CD4-positive, alpha-beta T cell (primary cell): ENCODE measurements at regions of chr5 and their contacts with region 1.

Region 1: GRCh38 chr5:79235634-79236363 is at the start of gene JMY:
- DNase-seq: peak; percentile 72 to 94 (median 84)
- ATAC-seq: peak; percentile 86
- H3K4me3 ChIP-seq: peak within 1 kb of the TSS; percentile 65
- H3K4me3 Mint-ChIP-seq: peak within 1 kb of the TSS; percentile 97
- H3K27ac ChIP-seq: peak within 1 kb of the TSS; percentile 79 to 89
- H3K27ac Mint-ChIP-seq: peak within 1 kb of the TSS; percentile 96
- H3K4me1 ChIP-seq: peaks cover 26% of the 10 kb centered on the region
- H3K4me1 Mint-ChIP-seq: peaks cover 30% of the 10 kb centered on the region
- H3K27me3 ChIP-seq: no peaks in the 10 kb centered on the region
- H3K27me3 Mint-ChIP-seq: no peaks in the 10 kb centered on the region
- CTCF ChIP-seq: no peak
- total RNA-seq, gene JMY: 73.3 to 73.5 TPM

Region 2: DNA sequence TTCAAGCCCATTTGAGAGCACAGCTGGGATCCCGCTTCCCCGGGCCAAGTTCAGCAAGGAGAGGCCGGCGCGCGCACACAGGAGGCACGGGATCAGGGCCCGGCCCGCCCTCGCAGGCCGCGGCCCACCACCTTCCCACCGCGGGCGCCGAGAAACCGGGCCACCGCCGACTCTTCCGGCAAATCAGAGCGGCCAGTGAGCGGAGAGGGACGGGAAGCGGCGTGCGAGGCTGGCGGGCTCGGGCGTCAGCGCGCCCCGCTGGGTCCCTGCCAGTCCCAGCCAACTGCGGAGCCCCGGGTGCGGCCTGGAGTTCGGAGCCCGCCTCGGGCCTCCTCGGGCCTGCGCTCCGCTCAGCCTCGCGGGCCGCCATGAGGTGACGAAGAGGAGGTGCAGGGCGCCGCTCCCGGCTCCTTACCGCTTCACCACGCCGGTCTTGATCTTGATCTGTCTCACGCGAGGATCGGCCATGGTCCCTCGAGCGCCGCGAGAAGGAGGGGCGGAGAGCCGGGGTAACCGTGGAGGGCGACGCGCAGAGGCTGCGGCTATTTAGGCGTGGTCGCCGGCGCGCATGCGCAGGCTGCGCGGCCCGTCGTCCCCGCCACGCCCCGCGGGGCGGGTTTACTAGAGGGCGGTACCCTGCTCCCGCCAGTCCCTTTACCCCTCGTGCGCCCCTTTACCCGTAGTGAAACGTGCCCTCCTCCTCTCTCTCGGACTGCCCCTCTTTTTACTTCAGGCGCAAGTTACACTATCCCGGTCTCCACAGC is 1459.8 kb before region 1 on chr5 and contains the start of gene TBCA:
- CTCF ChIA-PET with region 1: no interaction called
- POLR2A ChIA-PET with region 1: no interaction called
- intact Hi-C with region 1: loop called in 1 of 2 experiments (anchors 10 kb)
- DNase-seq: peak; percentile 78 to 98 (median 89)
- ATAC-seq: peak; percentile 82
- H3K4me3 ChIP-seq: peak within 1 kb of the TSS; percentile 79
- H3K4me3 Mint-ChIP-seq: peak within 1 kb of the TSS; percentile 94
- H3K27ac ChIP-seq: peak within 1 kb of the TSS; percentile 89 to 92
- H3K27ac Mint-ChIP-seq: peak within 1 kb of the TSS; percentile 95
- H3K4me1 ChIP-seq: peaks cover 34% of the 10 kb centered on the region
- H3K4me1 Mint-ChIP-seq: peaks cover 53% of the 10 kb centered on the region
- H3K27me3 ChIP-seq: no peaks in the 10 kb centered on the region
- H3K27me3 Mint-ChIP-seq: no peaks in the 10 kb centered on the region
- CTCF ChIP-seq: peak; percentile 34
- total RNA-seq, gene TBCA: 72.0 to 72.9 TPM

Region 3: GRCh38 chr5:79255786-79256557 is 20.2 kb after region 1 on chr5:
- CTCF ChIA-PET with region 1: no interaction called
- POLR2A ChIA-PET with region 1: interaction called, 4 read pairs
- intact Hi-C with region 1: loop called in 1 of 2 experiments (anchors 2 kb)
- DNase-seq: no peak
- ATAC-seq: no peak
- H3K4me3 ChIP-seq: no peak overlapping the region
- H3K4me3 Mint-ChIP-seq: no peak overlapping the region
- H3K27ac ChIP-seq: no peak overlapping the region
- H3K27ac Mint-ChIP-seq: no peak overlapping the region
- H3K4me1 ChIP-seq: peaks cover 36% of the 10 kb centered on the region
- H3K4me1 Mint-ChIP-seq: peaks cover 53% of the 10 kb centered on the region
- H3K27me3 ChIP-seq: no peaks in the 10 kb centered on the region
- H3K27me3 Mint-ChIP-seq: no peaks in the 10 kb centered on the region
- CTCF ChIP-seq: no peak

Region 4: GRCh38 chr5:79514391-79515105 is 278.7 kb after region 1 on chr5:
- CTCF ChIA-PET with region 1: no interaction called
- POLR2A ChIA-PET with region 1: interaction called, 19 read pairs
- intact Hi-C with region 1: loop called (anchors 2 to 5 kb)
- DNase-seq: peak; percentile 76 to 97 (median 87)
- ATAC-seq: peak; percentile 85
- H3K4me3 ChIP-seq: peak overlapping the region; percentile 79
- H3K4me3 Mint-ChIP-seq: peak overlapping the region; percentile 98
- H3K27ac ChIP-seq: peak overlapping the region; percentile 69 to 89
- H3K27ac Mint-ChIP-seq: peak overlapping the region; percentile 96
- H3K4me1 ChIP-seq: peaks cover 19% of the 10 kb centered on the region
- H3K4me1 Mint-ChIP-seq: peaks cover 41% of the 10 kb centered on the region
- H3K27me3 ChIP-seq: peaks cover 5 to 15% of the 10 kb centered on the region in 2 experiments
- H3K27me3 Mint-ChIP-seq: peaks cover 34% of the 10 kb centered on the region
- CTCF ChIP-seq: no peak

Region 5: DNA sequence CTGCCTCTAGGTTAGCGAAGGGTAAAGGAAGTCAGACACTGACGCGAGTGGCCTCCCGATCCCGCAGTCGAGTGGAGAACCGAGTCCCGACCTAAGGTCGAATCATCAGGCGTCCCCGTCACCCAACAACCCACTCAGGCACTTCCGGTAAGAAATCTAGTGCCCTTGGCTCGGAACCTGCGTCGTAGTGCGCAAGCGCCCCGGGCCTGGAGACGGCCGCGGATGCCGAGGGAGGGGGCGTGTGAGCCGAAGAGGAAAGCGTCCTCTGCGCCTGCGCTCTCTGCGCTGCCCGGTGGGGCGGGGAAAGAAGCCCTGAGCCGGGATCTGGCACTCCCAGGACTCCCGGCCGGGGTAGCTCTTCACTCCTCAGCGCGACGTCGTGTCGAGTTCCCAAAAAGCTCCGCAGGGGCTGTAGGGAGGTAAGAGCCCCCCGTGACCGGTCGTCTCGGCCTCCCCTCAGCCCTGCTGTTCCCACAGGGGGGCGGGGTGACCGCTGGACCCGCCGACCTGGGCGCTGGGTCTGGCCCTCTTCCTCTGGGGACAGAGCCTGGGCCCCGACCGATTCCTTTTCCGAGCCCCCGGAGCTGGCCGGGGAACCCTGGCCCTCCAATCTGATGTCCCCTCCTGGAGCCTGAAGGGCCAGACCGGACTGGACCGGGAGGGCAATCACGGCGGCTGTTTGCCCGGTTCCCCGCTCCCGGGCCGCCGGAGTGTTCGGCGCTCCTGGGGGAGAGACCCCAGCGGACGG is 1172.1 kb after region 1 on chr5 and contains the start of gene ZFYVE16:
- CTCF ChIA-PET with region 1: no interaction called
- POLR2A ChIA-PET with region 1: no interaction called
- intact Hi-C with region 1: loop called in 1 of 2 experiments (anchors 10 kb)
- DNase-seq: peak; percentile 91 to 99 (median 96)
- ATAC-seq: peak; percentile 87
- H3K4me3 ChIP-seq: peak within 1 kb of the TSS; percentile 99
- H3K4me3 Mint-ChIP-seq: peak within 1 kb of the TSS; percentile 99
- H3K27ac ChIP-seq: peak within 1 kb of the TSS; percentile 85 to 97
- H3K27ac Mint-ChIP-seq: peak within 1 kb of the TSS; percentile 93
- H3K4me1 ChIP-seq: peaks cover 15% of the 10 kb centered on the region
- H3K4me1 Mint-ChIP-seq: peaks cover 34% of the 10 kb centered on the region
- H3K27me3 ChIP-seq: no peaks in the 10 kb centered on the region
- H3K27me3 Mint-ChIP-seq: no peaks in the 10 kb centered on the region
- CTCF ChIP-seq: no peak
- total RNA-seq, gene ZFYVE16: 7.5 to 7.9 TPM